Activated CD4-positive, alpha-beta T cell treated with anti-CD3 and anti-CD28 coated beads, Interleukin-2, amount 10 ng/mL, durations not matched to agents 24 days and 14 days (primary cell): ENCODE measurements at regions of chr11 and their contacts with region 1.

Region 1: DNA sequence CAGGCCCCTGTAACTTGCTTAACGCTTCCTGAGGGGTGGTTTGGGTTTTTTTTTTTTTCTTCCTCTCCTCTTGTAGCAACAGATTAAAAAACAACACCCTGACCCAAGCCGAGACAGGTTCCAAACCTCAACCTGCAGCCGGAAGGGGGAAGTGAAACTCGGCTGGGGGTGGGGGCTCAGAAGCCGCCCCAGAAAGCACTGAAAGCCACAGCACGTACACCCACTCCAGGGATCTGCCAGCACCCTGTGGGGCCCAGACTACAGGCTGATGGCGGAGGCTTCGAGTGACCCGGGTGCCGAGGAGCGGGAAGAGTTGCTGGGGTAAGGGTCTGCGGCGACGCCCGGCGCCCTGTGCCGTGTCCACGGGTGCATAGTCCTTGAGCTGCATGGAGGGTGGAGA is at the start of gene LSP1:
- DNase-seq: peak; percentile 96
- H3K4me3 Mint-ChIP-seq: peak within 1 kb of the TSS; percentile 93
- H3K27ac Mint-ChIP-seq: peak within 1 kb of the TSS; percentile 99
- H3K4me1 Mint-ChIP-seq: peaks cover 42% of the 10 kb centered on the region
- H3K27me3 Mint-ChIP-seq: no peaks in the 10 kb centered on the region
- total RNA-seq, gene LSP1: 303 and 322 TPM in 2 replicates

Region 2: DNA sequence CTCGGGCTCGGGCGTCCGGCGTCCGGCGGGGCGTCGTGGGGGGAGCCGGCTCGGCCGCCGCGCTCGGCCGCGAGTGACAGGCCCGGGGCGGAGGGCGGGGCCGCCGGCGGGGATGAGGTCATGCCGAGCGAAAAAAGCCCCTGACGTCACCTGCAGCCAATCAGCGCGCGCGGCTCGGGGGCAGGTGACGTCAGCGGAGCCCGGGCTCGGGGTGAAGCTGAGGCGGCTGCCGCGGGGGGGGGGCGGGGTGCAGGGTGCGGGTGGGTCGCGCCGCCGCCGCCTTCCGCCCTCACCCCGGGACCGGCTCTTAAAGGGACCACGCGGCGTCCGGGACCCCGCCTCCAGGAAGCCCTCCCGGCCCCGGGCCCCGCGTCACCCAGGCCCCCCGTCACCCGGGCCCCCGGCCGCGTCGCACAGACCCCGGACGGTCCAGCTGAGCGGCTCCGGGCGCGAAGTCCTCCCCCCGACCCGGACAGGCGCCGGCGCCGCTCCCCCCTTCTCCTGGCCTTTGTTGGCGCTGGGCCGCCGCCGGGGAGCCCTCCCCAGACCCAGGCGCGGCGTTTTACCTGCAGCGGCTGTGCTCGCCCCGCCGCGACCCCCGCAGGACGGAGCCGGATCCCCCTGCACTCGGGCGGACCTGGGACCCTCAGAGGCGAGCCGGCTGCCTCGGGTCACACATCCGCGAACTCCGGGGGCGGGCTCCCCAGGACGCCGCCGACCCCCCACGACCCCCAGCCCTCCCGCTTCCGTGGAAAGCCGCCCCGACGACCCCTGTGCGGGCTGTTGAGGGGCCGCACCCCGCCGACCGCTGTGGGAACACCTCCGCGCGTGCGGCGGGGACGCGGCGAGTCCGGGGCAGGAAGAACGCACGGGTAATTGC is 280.4 kb before region 1 on chr11 and contains the start of gene DUSP8:
- intact Hi-C with region 1: loop called (anchors 5 kb)
- DNase-seq: peak; percentile 97
- H3K4me3 Mint-ChIP-seq: peak within 1 kb of the TSS; percentile 15
- H3K27ac Mint-ChIP-seq: no peak within 1 kb of the TSS
- H3K4me1 Mint-ChIP-seq: peaks cover 4% of the 10 kb centered on the region
- H3K27me3 Mint-ChIP-seq: peaks cover 37% of the 10 kb centered on the region
- total RNA-seq, gene DUSP8: 0.86 and 1.6 TPM in 2 replicates

Region 3: GRCh38 chr11:1659506-1659905 is 193.4 kb before region 1 on chr11:
- intact Hi-C with region 1: no loop called
- DNase-seq: no peak
- H3K4me3 Mint-ChIP-seq: no peak overlapping the region
- H3K27ac Mint-ChIP-seq: no peak overlapping the region
- H3K4me1 Mint-ChIP-seq: no peaks in the 10 kb centered on the region
- H3K27me3 Mint-ChIP-seq: peaks cover 23% of the 10 kb centered on the region

Region 4: GRCh38 chr11:1889224-1890120 is 36.6 kb after region 1 on chr11:
- intact Hi-C with region 1: loop called (anchors 2 kb)
- DNase-seq: peak; percentile 91
- H3K4me3 Mint-ChIP-seq: peak overlapping the region; percentile 70
- H3K27ac Mint-ChIP-seq: peak overlapping the region; percentile 84
- H3K4me1 Mint-ChIP-seq: peaks cover 28% of the 10 kb centered on the region
- H3K27me3 Mint-ChIP-seq: no peaks in the 10 kb centered on the region

Region 5: GRCh38 chr11:2142762-2143202 is 289.9 kb after region 1 on chr11:
- intact Hi-C with region 1: loop called (anchors 1 kb)
- DNase-seq: no peak
- H3K4me3 Mint-ChIP-seq: peak overlapping the region; percentile 51
- H3K27ac Mint-ChIP-seq: peak overlapping the region; percentile 80
- H3K4me1 Mint-ChIP-seq: peaks cover 13% of the 10 kb centered on the region
- H3K27me3 Mint-ChIP-seq: peaks cover 61% of the 10 kb centered on the region

Region 6: DNA sequence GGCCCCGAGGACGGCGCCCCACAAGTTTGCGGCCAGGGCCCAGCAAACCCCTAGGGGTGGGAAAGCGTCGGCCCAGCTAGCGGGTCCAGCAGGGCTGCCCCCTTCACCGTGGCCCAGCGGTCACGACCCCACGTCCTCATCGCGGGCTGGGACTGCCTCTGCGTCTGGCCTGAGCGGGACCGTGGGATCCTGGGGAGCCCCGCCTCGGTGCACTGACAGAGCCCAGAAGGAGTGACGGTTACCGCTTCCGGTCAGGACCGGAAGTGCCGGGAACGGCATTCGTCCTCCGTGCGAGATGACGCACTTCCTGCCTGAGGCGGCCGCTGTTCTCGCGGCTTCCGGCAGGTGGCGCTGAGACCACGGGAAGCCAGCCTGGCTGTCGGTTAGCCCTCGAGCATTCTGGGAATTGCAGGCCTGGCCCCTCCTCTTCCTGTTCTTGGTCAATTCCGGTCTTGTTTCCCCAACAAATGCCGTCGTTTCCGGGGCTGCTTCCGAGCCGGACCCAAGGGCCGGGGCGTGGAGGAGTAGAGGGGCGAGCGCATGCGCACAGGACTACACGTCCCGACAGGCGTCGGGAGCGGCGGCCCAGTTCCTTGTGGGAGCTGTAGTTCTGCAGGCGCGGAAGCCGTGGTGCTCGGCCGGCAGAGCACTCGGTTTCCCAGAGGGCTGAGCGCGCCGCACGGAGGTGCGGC is 547.3 kb after region 1 on chr11 and contains the start of gene TSSC4:
- intact Hi-C with region 1: loop called (anchors 2 kb)
- DNase-seq: peak; percentile 100
- H3K4me3 Mint-ChIP-seq: peak within 1 kb of the TSS; percentile 93
- H3K27ac Mint-ChIP-seq: peak within 1 kb of the TSS; percentile 91
- H3K4me1 Mint-ChIP-seq: peaks cover 11% of the 10 kb centered on the region
- H3K27me3 Mint-ChIP-seq: peaks cover 2% of the 10 kb centered on the region
- total RNA-seq, gene TSSC4: 61.8 and 62.9 TPM in 2 replicates